CD4-positive, alpha-beta T cell (primary cell): ENCODE measurements at regions of chr20 and their contacts with region 1.

Region 1: GRCh38 chr20:44747166-44748004 is 1.7 kb downstream of the KCNK15 start:
- DNase-seq: peak; percentile 22 to 74 (median 46)
- ATAC-seq: peak; percentile 60
- H3K4me3 ChIP-seq: no peak overlapping the region
- H3K4me3 Mint-ChIP-seq: peak overlapping the region; percentile 72
- H3K27ac ChIP-seq: no peak overlapping the region
- H3K27ac Mint-ChIP-seq: no peak overlapping the region
- H3K4me1 ChIP-seq: peaks cover 10% of the 10 kb centered on the region
- H3K4me1 Mint-ChIP-seq: peaks cover 20% of the 10 kb centered on the region
- H3K27me3 ChIP-seq: peaks cover 17 to 30% of the 10 kb centered on the region in 2 experiments
- H3K27me3 Mint-ChIP-seq: peaks cover 37% of the 10 kb centered on the region
- CTCF ChIP-seq: peak; percentile 55

Region 2: DNA sequence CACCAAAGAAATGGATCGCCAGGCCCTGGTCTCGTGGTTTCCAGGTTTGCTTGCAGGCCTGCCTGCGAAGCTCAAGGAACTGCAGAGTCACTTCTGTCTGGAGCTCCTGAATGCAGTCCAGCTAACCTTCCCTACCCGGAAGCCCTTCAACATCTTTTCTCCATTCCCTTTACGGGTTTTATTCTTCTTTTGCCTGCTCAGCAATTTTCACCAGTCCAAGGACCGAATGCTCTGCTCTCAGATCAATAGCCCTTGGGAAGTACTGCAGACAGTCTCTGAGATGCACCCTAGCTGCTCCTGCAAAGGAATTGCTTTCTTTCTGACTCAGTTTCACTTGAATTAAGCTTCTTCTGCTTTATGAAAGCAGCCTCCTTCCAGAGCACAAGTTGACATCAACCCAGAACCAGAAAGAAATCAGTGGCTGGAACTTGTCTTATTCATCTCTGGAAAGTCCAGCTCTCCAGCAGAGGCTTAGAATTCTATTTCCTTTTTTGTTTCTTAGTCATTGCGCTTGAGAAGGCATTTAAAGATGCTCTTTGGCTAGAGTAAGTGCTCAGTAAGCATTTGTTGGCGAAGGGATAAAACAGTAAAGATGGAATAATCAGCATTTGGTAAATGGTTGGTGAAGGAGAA is 119.4 kb after region 1 on chr20:
- CTCF ChIA-PET with region 1: no interaction called
- POLR2A ChIA-PET with region 1: no interaction called
- intact Hi-C with region 1: loop called (anchors 1 to 5 kb)
- DNase-seq: peak in 2 of 14 experiments; percentile 32 to 40
- ATAC-seq: no peak
- H3K4me3 ChIP-seq: no peak overlapping the region
- H3K4me3 Mint-ChIP-seq: peak overlapping the region; percentile 70
- H3K27ac ChIP-seq: no peak overlapping the region
- H3K27ac Mint-ChIP-seq: no peak overlapping the region
- H3K4me1 ChIP-seq: peaks cover 7% of the 10 kb centered on the region
- H3K4me1 Mint-ChIP-seq: peaks cover 10% of the 10 kb centered on the region
- H3K27me3 ChIP-seq: peaks cover 0 to 5% of the 10 kb centered on the region in 2 experiments
- H3K27me3 Mint-ChIP-seq: peaks cover 9% of the 10 kb centered on the region
- CTCF ChIP-seq: no peak